ENCODE measurements at regions of chr15 and their contacts with region 1.

Region 1: DNA sequence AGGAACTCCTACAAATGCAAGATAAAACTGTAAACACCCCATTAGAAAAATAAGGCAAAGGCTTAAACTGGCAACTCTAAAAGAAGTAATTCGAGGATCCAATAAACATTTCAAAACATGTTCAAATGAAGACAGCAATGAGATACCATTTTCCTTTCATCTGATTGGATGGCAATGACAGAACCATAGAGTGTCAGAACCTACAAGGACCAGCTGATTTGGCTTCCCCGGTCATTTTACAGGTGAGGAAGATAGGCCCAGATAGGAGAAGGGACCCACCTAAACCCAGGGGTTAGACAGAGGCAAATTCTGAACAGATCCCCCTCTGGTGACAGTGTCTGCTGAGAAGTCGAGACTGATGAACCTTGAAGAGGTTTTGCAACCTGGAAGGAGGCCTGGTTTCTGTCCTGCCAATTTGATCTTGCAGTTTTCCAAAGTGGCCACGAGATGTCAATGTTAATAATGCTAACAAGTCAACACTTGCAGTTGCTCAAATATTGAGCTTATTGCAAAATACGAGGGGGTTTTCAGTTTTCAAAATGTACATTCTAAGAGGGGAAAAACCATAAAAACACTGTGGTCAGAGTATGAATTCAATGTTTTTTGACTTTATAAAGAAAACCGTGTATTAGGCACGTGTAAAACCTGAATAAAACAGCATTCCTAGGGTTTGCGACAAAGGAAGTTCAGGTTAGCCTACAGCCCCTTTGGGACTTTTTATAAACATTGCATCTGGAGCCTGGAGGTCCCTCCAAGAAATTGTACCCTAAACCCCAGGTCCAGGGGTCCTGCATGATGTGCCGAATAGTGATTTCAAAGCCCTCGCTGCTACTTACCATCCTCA is 21.5 kb downstream of the CFAP161 start:
- DNase-seq: peak; percentile 63
- H3K4me3 ChIP-seq: no peak overlapping the region
- H3K27ac ChIP-seq: no peak overlapping the region
- H3K4me1 ChIP-seq: peaks cover 33% of the 10 kb centered on the region
- H3K27me3 ChIP-seq: no peaks in the 10 kb centered on the region
- CTCF ChIP-seq: peak; percentile 66 to 71

Region 2: GRCh38 chr15:81029414-81030300 is 125.9 kb before region 1 on chr15:
- CTCF ChIA-PET with region 1: no interaction called
- dilution Hi-C with region 1: no loop called
- in situ Hi-C with region 1: no loop called
- intact Hi-C with region 1: no loop called
- DNase-seq: peak; percentile 28
- H3K4me3 ChIP-seq: no peak overlapping the region
- H3K27ac ChIP-seq: no peak overlapping the region
- H3K4me1 ChIP-seq: peaks cover 5% of the 10 kb centered on the region
- H3K27me3 ChIP-seq: no peaks in the 10 kb centered on the region
- CTCF ChIP-seq: no peak

Region 3: GRCh38 chr15:81111510-81112470 is 43.8 kb before region 1 on chr15:
- CTCF ChIA-PET with region 1: no interaction called
- dilution Hi-C with region 1: no loop called
- in situ Hi-C with region 1: loop called in 1 of 2 experiments (anchors 5 kb)
- intact Hi-C with region 1: loop called (anchors 1 kb)
- DNase-seq: peak; percentile 79
- H3K4me3 ChIP-seq: no peak overlapping the region
- H3K27ac ChIP-seq: peak overlapping the region; percentile 88
- H3K4me1 ChIP-seq: peaks cover 33% of the 10 kb centered on the region
- H3K27me3 ChIP-seq: no peaks in the 10 kb centered on the region
- CTCF ChIP-seq: no peak

Region 4: GRCh38 chr15:81182031-81182755 is 26.6 kb after region 1 on chr15:
- CTCF ChIA-PET with region 1: no interaction called
- dilution Hi-C with region 1: no loop called
- in situ Hi-C with region 1: no loop called
- intact Hi-C with region 1: no loop called
- DNase-seq: no peak
- H3K4me3 ChIP-seq: no peak overlapping the region
- H3K27ac ChIP-seq: no peak overlapping the region
- H3K4me1 ChIP-seq: no peaks in the 10 kb centered on the region
- H3K27me3 ChIP-seq: no peaks in the 10 kb centered on the region
- CTCF ChIP-seq: no peak

Region 5: GRCh38 chr15:81195339-81195864 is 39.8 kb after region 1 on chr15:
- CTCF ChIA-PET with region 1: interaction called, 7 read pairs
- dilution Hi-C with region 1: loop called (anchors 5 kb)
- in situ Hi-C with region 1: no loop called
- intact Hi-C with region 1: no loop called
- DNase-seq: no peak
- H3K4me3 ChIP-seq: no peak overlapping the region
- H3K27ac ChIP-seq: no peak overlapping the region
- H3K4me1 ChIP-seq: peaks cover 4% of the 10 kb centered on the region
- H3K27me3 ChIP-seq: no peaks in the 10 kb centered on the region
- CTCF ChIP-seq: no peak

Region 6: DNA sequence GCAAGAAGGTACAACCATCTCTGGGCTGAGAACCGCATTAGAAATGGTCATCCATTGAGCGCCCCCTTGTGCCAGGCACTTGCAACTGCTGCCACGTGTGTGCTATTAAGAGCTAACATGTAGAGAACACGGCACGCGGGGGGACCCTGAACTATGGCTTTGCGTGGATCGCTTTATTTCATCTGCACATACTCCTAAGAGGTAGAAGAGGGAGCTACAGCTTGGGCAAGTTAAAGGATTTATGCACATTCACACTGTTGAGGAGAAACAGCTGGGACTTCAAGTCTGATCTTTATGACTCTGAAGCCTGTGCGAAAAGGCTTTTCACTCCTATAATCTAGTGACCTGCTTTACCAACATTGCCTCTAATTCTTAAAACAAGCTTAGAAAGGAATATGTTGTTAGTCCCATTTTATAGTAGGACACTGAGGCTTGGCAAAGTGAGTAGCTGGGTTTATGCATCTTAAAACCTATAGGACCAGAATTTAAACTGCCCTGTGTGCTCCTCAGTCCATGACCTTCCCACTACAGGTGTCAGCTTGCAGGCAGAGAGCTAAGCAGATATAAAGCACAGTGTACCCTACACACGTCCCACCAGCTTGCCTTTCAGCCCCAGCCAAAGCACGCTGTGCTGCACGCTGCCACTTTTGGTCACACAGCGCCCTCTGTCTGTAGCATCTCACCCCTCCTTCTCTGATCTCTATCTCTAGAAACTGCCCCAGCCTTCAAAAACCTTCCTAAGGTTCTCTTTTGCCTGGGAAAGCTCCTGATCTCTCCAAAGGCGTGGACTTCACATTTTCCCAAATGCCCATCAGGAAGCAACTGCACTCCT is 110.6 kb after region 1 on chr15:
- CTCF ChIA-PET with region 1: interaction called, 12 read pairs
- dilution Hi-C with region 1: loop called (anchors 5 kb)
- in situ Hi-C with region 1: loop called in 1 of 2 experiments (anchors 10 kb)
- intact Hi-C with region 1: loop called (anchors 2 kb)
- DNase-seq: peak; percentile 59
- H3K4me3 ChIP-seq: peak overlapping the region in 1 of 3 experiments; percentile 1
- H3K27ac ChIP-seq: no peak overlapping the region
- H3K4me1 ChIP-seq: peaks cover 5% of the 10 kb centered on the region
- H3K27me3 ChIP-seq: no peaks in the 10 kb centered on the region
- CTCF ChIP-seq: peak; percentile 95 to 96

Measured in mammary epithelial cell (primary cell).